ENCODE measurements at regions of chr14 and their contacts with region 1.

Region 1: DNA sequence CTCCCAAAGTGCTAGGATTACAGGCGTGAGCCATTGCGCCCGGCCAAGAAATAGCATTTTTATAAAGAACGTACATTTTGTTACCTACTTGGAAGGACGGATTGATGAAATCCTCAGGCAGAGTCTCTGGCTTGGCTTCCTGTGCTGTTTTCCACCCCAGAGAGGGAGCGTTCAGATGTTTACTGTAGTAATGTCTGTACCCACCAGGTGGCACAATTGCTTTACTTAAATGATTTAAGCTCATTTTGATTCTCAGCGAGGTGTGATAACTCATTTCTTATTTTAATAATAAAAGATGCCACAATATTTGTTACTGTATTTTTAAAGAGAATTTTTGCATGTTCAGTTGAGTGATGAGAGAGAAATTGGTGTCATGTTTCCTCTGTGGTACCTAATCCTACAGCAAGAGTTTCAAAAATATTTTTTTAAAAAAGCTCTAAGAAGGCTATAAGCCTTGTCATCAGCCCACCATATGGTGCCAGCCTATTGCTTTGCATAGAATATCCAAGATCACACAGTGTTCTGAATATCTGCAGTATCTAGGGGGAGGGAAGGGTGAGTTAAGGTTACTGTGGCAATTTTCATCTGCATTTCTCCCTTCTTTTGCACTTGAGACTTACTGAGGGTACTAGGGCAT is 82.6 kb upstream of the TRAF3 start:
- DNase-seq: peak; percentile 64
- H3K4me3 Mint-ChIP-seq: no peak overlapping the region
- H3K27ac Mint-ChIP-seq: no peak overlapping the region
- H3K4me1 Mint-ChIP-seq: peaks cover 32% of the 10 kb centered on the region
- H3K27me3 Mint-ChIP-seq: no peaks in the 10 kb centered on the region
- CTCF ChIP-seq: peak; percentile 47

Region 2: DNA sequence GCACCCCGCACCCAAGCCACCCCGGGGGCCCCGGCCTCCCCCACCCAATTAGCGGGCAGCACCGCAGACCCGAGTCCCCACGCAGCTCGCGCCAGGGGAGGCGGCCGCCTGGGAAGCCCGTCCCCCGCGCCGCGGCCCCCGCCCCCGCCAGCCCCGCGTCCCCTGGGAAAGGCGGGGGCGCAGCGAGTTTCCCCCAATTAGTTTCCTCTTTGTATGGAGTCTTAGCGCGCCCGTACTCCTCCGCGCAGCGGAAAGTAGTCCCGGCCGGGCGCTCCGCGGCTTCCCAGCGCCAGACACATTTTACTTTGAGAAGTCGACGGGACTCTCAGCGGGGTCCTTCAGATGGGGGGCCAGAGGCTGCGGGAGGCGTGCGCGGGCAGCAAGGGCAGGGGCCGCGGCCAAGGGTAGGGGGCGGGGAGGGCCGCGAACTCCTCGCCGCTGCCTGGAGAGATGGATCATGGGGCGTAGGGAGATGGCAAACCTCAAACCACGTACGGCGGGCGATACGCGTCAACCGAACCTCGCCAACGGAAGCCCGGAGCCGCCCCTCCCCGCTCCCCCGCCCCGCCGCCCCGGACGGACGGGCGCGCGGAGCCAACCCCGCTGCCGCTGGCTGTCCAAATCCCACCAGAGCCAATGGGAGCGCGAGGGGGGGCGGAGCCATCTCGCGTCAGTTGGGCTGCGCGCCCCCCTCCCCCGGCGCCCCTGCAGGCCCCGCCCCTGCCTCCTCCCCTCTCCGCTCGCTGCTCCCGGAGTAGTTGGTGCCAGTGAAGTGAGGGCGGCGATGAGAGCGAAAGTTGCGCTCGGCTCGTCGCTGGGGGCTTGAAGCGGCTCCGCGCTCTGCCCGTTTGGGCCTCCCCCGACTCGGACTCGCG is 102.5 kb before region 1 on chr14 and contains the start of gene RCOR1:
- CTCF ChIA-PET with region 1: interaction called, 3 read pairs
- intact Hi-C with region 1: loop called (anchors 5 kb)
- DNase-seq: peak; percentile 98
- H3K4me3 Mint-ChIP-seq: peak within 1 kb of the TSS; percentile 85
- H3K27ac Mint-ChIP-seq: peak within 1 kb of the TSS; percentile 86
- H3K4me1 Mint-ChIP-seq: peaks cover 30% of the 10 kb centered on the region
- H3K27me3 Mint-ChIP-seq: no peaks in the 10 kb centered on the region
- CTCF ChIP-seq: no peak
- total RNA-seq, gene RCOR1: 27.2 and 28.6 TPM in 2 replicates

Region 3: DNA sequence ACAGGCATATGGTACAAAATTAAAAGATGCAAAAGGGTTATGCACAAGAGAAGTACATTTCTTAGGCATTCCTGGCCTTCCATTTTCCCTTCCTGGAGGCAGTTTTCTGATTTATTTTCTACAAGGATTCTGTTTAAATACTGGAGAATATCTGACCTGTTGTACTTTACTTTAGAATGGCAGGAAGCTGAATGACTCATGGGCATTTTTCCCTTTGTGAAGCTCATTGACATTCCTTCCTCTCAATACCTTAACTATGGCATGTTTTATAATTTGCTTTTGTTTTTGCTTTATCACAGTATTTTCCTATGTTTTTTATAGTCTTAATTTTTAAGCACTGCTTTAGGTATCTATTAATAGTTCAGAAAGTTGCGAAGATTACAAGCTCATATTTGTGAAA is 39.5 kb before region 1 on chr14:
- CTCF ChIA-PET with region 1: interaction called, 14 read pairs
- intact Hi-C with region 1: no loop called
- DNase-seq: peak; percentile 9
- H3K4me3 Mint-ChIP-seq: peak overlapping the region; percentile 7
- H3K27ac Mint-ChIP-seq: peak overlapping the region; percentile 63
- H3K4me1 Mint-ChIP-seq: peaks cover 36% of the 10 kb centered on the region
- H3K27me3 Mint-ChIP-seq: no peaks in the 10 kb centered on the region
- CTCF ChIP-seq: no peak

Region 4: GRCh38 chr14:102711946-102712345 is 17.3 kb after region 1 on chr14:
- CTCF ChIA-PET with region 1: interaction called, 10 read pairs
- intact Hi-C with region 1: no loop called
- DNase-seq: peak; percentile 15
- H3K4me3 Mint-ChIP-seq: no peak overlapping the region
- H3K27ac Mint-ChIP-seq: no peak overlapping the region
- H3K4me1 Mint-ChIP-seq: no peaks in the 10 kb centered on the region
- H3K27me3 Mint-ChIP-seq: no peaks in the 10 kb centered on the region
- CTCF ChIP-seq: no peak

Region 5: DNA sequence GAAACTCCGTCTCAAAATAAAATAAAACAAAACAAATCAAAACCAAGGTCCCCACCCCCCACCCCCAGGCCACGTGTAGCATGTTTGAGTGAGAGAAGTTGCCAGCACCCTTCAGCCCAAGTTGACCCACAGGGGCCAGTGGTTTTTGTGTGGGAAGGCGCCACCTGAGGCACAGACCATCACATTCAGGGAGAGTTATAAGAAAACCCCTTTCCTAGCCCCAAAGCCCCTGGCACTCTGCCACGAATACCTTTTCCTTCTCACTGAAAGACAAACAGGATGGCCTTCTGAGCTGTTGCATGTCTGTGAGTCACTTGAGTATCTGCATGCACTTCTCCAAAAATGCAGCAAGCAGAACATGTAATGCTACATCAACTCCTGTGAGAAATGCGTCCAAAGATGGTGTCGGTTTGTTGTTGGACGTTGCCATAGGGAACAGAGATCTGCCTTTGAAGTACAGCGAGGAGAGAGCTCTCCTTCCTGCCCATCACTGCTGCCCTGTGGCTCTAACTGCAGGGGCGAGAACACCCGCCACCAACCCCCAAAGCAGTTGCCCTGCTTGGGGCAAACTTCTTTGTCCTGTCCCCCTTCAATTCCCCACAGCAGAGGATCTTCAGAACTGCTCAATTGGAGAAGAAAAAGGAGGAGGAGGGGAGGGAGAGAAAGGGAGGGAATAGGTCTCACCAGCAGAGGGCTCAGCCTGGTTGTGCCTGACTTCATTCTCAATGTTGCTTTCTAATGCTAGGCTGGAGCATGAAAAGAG is 79.9 kb after region 1 on chr14:
- CTCF ChIA-PET with region 1: interaction called, 3 read pairs
- intact Hi-C with region 1: loop called (anchors 10 kb)
- DNase-seq: peak; percentile 57
- H3K4me3 Mint-ChIP-seq: no peak overlapping the region
- H3K27ac Mint-ChIP-seq: peak overlapping the region; percentile 31
- H3K4me1 Mint-ChIP-seq: peaks cover 10% of the 10 kb centered on the region
- H3K27me3 Mint-ChIP-seq: peaks cover 25% of the 10 kb centered on the region
- CTCF ChIP-seq: peak; percentile 39

Region 6: DNA sequence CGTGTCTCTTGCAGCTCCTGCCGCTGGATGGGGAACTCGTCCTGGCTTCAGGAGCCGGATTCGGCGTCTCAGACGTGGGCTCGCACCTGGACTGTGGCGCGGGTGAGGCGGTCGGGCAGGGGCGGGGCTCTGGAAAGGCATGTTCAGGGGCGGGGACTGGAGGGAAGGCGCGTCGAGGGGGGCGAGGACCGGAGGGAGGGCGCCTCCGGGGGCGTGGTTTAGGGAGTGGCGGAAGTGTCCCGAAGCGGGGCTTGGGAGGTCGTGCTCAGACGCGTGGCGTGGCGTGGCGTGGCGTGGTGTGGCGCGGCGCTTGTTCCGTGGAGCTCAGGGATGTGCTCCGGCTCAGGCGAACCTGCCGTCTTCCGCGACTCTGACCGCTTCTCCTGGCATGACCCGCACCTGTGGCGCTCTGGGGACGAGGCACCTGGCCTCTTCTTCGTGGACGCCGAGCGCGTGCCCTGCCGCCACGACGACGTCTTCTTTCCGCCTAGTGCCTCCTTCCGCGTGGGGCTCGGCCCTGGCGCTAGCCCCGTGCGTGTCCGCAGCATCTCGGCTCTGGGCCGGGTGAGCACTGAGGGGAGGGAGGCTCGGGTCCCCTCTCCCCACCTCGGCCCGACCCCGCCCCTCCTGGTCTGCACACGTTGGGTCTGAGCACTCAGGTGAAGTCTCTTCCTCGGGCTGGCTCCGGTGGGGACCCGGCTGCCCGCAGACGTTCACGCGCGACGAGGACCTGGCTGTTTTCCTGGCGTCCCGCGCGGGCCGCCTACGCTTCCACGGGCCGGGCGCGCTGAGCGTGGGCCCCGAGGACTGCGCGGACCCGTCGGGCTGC is 234.0 kb after region 1 on chr14:
- CTCF ChIA-PET with region 1: interaction called, 3 read pairs
- intact Hi-C with region 1: loop called (anchors 10 kb)
- DNase-seq: peak; percentile 91
- H3K4me3 Mint-ChIP-seq: peak overlapping the region; percentile 54
- H3K27ac Mint-ChIP-seq: no peak overlapping the region
- H3K4me1 Mint-ChIP-seq: peaks cover 9% of the 10 kb centered on the region
- H3K27me3 Mint-ChIP-seq: no peaks in the 10 kb centered on the region
- CTCF ChIP-seq: no peak